ENCODE measurements at regions of chr19 and their contacts with region 1.

Region 1: DNA sequence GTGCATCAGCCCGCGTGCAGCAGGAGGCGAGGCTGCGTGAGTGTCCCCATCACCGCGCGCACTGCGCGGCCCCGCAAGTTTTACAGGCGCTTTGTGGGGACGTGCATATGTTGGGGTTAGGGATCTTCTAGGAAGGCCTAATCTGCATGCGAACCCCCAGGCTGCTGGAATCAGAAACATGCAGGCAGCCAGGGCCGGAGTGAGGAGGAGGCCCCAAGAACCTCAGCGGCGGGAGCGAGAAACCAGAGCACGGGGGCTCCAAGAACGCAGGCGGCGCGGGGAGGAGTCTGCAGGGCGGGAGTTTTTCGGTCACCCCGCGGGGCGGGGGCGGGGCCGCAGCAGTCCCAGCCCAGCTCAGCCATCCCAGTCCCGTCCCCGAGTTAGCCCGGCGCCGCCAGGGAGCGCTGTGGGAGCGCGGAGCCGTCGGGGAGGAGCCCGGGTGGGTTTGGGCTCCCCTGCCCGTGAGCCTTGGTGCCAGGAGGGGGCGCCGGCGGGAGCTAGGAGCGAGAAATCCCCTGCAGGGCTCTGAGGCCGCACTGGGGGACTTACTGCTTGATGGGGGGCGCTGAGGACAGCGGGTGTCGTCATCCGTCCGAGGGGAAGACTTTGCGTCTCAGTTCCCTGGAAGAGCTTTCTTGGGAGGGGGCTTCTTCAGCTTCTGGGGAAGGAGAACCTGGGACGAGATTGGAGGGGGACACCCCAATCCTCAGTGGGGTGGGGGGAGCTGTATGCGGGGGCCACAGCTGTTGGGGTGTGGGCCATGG is 933 bp upstream of the NRTN start:
- DNase-seq: peak; percentile 89
- ATAC-seq: peak; percentile 88 to 90

Region 2: GRCh38 chr19:5661451-5661873 is 142.5 kb before region 1 on chr19:
- intact Hi-C with region 1: no loop called
- DNase-seq: no peak
- ATAC-seq: no peak

Region 3: DNA sequence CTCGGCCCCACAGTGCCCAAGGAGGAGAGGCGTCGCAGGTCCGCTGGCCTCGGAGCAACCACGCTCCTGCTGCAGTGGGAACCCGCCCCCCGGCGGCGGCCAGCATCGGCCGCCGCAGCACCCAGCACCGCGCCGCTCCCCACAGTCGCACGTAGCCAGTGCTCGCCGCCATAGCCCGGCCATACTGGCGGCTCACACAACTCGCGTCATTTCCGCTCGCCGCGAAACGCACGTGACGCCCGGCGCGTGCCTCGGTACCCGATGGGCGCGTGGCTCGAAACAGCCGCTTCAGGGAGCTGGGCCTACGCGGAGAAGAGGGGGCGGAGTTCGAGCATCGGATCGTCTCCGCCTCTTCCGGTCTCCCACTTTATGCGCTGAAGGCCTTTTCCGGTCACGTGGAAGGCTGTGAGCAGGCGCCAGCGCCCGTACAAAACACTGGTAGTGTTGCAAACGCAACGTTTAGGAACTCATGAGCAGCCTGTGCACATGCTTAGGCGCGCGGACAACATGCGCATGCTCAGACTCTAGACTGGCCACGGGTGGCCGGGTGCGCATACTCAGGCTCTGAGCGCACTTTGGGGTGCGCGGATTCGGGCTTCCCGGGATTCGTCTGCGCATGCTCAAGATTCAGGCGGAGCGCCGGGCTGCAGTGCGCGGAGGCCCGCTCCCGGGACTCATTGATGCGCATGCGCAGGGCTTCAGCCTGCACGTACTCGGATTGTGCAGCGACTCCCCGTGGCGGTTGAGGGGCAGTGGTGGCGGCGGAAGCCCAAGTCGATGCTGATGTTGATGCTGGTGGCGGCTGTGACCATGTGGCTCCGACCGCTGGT is 83.8 kb before region 1 on chr19 and contains the starts of genes CATSPERD and LONP1:
- intact Hi-C with region 1: no loop called
- DNase-seq: peak; percentile 99
- ATAC-seq: peak; percentile 97 to 98
- total RNA-seq, gene CATSPERD: not detected
- total RNA-seq, gene LONP1: 51.4 to 57.1 TPM

Region 4: DNA sequence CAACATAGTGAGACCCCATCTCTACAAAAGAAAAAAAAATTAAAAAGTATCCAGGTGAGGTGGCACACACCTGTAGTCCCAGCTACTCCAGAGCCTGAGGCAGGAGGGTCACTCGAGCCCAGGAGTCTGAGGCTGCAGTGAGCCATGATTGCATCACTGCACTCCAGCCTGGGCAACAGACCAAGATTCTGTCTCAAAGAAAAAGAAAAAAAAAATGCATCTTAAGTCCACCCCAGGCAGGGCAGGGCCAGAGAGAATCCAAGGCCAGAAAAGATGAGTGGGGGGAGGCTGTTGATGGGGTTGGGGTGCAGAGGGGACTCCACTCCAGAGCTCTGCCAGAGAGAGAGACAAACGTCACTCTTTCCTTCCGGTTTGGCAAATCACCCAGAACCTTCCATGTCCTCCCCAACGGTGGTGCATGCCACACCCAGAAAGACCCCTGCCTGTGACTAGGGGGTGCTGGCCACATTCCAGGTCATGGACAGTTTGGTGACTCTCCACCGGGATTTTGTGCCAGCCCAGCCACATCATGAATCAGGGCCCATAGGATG is 46.9 kb after region 1 on chr19:
- intact Hi-C with region 1: no loop called
- DNase-seq: peak; percentile 52
- ATAC-seq: peak; percentile 38 to 59

Region 5: DNA sequence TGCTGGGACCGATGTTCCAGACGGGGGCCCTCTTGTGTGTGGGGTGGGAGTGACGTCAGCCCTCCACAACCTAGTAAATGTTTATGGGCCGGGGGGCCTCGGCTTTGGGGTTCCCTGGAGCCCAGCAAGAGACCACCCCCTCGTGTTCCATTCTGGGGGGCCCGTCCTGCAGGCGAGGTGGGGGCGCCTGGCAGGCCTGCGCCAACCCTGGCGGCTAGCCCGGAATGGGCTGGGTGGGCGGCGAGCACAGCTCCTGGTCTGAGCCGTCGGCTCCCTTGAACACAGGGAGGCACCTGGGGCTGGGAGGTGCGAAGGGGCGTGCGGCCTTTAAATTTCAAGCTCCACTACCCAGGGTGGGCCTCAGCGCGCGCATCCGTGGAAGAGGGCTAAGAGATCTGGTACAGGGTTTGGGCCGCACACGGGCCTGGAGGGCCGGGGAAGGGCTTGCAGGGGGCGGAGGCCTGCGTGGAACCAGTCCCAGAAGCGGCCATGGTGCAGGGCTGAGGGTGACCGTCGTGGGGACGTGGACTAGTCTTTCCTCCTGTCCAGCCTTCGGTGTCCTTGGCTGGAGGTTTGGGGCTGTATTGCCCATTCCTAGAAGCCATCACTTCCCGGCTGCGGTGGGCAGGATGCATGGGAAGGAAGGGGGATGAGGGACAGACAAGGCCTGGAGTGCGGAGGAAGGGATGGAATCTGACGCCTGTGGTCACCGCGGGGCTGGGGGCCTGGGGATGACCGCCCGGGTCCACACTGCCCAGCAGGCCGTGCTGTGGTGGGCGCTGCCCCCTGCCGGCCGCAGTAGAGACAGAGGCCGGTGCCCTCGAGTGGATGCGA is 88.2 kb after region 1 on chr19:
- intact Hi-C with region 1: loop called (anchors 2 to 5 kb)
- DNase-seq: peak; percentile 64
- ATAC-seq: peak; percentile 43 to 54

Region 6: GRCh38 chr19:5963855-5964254 is 159.9 kb after region 1 on chr19:
- intact Hi-C with region 1: no loop called
- DNase-seq: no peak
- ATAC-seq: no peak

Region 7: GRCh38 chr19:5977785-5978605 is 174.1 kb after region 1 on chr19 and contains the start of gene RANBP3:
- intact Hi-C with region 1: loop called in 1 of 2 experiments (anchors 10 kb)
- DNase-seq: peak; percentile 100
- ATAC-seq: peak; percentile 98 to 99
- total RNA-seq, gene RANBP3: 44.7 to 52.7 TPM